Right cardiac atrium (tissue), 5 donors: ENCODE measurements at regions of chr2 and their contacts with region 1.

Region 1: GRCh38 chr2:237581751-237582746 is 8.5 kb downstream of the RAB17 start:
- DNase-seq: peak; percentile 76 to 92 (median 91)
- ATAC-seq: peak; percentile 90 to 92
- H3K4me3 ChIP-seq: no peak overlapping the region
- H3K27ac ChIP-seq: peak overlapping the region; percentile 54
- H3K4me1 ChIP-seq: no peaks in the 10 kb centered on the region
- H3K27me3 ChIP-seq: no peaks in the 10 kb centered on the region

Region 2: GRCh38 chr2:237674731-237675276 is 92.8 kb after region 1 on chr2:
- intact Hi-C with region 1: loop called in 1 of 4 experiments (anchors 10 kb)
- DNase-seq: peak; percentile 89 to 94 (median 93)
- ATAC-seq: peak; percentile 90 to 91
- H3K4me3 ChIP-seq: peak overlapping the region; percentile 19
- H3K27ac ChIP-seq: peak overlapping the region; percentile 80
- H3K4me1 ChIP-seq: peaks cover 22% of the 10 kb centered on the region
- H3K27me3 ChIP-seq: no peaks in the 10 kb centered on the region